BJ (cell line): ENCODE measurements at regions of chr11 and their contacts with region 1.

Region 1: DNA sequence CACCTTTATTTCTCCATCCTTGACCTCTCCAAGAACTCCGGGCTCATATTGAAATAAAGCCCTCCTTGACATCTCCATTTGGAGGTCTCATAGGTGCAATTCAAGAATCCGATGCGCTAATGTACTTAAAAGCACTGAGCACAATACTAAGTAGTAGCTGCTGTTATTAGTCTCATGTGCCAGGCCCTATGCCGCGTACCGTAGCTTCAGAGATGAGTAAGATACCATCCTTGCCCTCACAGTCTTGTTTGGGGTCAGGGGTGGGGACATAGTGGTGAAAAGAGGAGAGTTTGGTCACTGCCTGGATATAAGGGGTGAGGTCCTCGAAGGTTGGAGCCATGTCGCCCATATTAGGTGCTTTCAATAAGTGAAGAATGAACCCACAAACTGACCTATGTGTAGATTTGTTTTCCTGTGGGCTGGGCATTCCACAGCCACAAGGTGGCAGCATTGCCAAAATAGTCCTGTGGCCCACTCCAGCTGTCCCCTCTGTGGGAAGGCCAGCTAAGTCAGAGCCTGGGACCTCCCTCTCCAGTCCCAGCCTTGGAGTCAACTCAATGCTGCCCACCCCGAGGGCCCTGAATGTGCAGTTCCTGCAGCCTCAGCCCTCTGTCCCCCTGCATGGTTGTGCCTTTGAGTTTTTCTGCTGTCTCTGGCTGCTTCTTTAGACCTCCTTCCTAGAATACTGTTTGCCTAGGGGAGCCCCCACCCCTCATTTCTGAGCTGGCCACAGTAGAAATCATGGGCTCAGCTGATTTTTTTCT is 6.5 kb downstream of the DCPS start:
- DNase-seq: no peak
- H3K4me3 ChIP-seq: no peak overlapping the region
- H3K27me3 ChIP-seq: no peaks in the 10 kb centered on the region
- CTCF ChIP-seq: peak; percentile 91

Region 2: GRCh38 chr11:126194121-126194543 is 116.3 kb before region 1 on chr11:
- CTCF ChIA-PET with region 1: no interaction called
- POLR2A ChIA-PET with region 1: no interaction called
- DNase-seq: no peak
- H3K4me3 ChIP-seq: no peak overlapping the region
- H3K27me3 ChIP-seq: no peaks in the 10 kb centered on the region
- CTCF ChIP-seq: peak; percentile 59

Region 3: DNA sequence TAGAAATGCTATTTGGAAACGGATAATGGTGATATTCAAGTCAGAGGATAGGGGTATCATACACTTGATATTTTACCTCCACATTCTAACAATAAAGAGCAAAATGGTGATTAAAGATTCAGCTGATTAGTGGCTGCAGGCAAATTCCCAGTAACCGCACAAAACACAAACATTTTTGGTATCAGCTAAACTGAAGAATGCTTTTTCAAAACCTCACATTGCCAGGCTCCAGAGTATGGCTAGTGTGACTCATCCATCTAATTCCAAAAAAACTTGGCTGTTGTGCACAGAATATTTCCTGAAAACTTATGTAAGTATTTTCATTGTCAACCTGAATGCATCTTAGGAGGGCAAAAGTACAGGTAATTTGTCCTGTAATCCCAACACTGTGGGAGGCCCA is 52.6 kb before region 1 on chr11:
- CTCF ChIA-PET with region 1: no interaction called
- POLR2A ChIA-PET with region 1: no interaction called
- DNase-seq: peak; percentile 30
- H3K4me3 ChIP-seq: no peak overlapping the region
- H3K27me3 ChIP-seq: no peaks in the 10 kb centered on the region
- CTCF ChIP-seq: no peak

Region 4: GRCh38 chr11:126334659-126335462 is 24.5 kb after region 1 on chr11:
- CTCF ChIA-PET with region 1: interaction called, 17 read pairs
- POLR2A ChIA-PET with region 1: no interaction called
- DNase-seq: no peak
- H3K4me3 ChIP-seq: no peak overlapping the region
- H3K27me3 ChIP-seq: no peaks in the 10 kb centered on the region
- CTCF ChIP-seq: no peak

Region 5: DNA sequence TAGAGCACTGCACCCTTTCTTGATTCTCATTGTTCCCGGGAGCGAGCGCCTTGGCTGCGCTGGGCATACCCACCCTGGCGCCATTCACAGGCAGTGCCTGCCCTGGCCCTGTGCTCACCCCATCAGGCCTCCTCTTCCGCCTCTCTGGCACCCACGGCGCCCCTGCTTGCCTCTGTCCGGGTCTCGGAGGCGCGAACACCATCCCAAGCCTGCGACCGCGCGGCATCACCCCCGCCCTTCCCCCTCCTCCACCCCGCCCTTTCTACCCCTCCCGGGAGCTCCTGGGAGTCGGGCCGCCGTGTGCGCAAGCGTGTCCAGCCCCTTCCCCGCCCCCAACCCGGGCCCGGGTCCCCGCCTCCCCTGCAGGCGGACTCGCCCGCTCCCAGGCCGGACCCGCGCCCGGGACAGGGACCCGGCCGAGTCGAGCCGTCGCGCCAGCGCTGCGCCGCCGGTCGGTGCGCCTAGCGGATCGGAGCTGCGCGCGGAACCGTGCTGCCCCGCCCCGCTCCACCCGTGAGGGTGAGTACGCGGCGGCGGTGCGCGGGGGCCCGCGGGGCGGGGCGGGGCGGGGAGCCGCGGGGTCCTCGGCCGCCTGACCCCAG is 45.0 kb after region 1 on chr11 and contains the start of gene ST3GAL4:
- CTCF ChIA-PET with region 1: interaction called, 44 read pairs
- POLR2A ChIA-PET with region 1: no interaction called
- DNase-seq: no peak
- H3K4me3 ChIP-seq: peak within 1 kb of the TSS; percentile 79
- H3K27me3 ChIP-seq: no peaks in the 10 kb centered on the region
- CTCF ChIP-seq: no peak
- polyA plus RNA-seq, gene ST3GAL4: 19.4 and 31.8 TPM in 2 replicates

Region 6: DNA sequence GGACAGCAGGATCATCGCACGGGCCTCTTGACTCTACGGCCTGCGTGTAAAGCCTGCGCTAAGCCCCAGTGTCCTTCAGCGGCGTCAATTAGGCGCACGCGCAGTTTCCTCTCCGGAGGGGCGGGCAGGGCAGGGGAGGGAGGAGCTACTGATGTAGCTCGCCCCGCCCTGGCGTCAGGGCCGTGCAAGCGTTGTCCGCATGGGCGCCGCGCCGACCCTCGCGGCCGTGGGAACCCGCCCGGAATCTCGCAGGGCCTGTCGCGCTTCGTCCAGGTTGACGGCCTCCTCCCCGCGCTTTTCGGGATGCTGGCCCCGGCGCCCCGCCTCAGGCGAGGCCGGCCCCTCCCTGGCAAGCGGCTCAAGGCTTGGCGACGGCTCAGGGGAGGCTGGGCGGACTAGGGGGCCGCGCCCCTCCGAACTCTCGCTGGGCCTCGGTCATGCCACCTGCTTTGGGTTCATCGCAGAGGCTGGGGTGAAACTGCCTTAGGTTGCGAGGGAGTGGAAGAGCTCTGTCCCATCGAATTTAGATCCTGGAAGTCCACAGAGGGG is 106.2 kb after region 1 on chr11:
- CTCF ChIA-PET with region 1: interaction called, 16 read pairs
- POLR2A ChIA-PET with region 1: interaction called, 3 read pairs
- DNase-seq: no peak
- H3K4me3 ChIP-seq: peak overlapping the region; percentile 45
- H3K27me3 ChIP-seq: no peaks in the 10 kb centered on the region
- CTCF ChIP-seq: no peak

Region 7: DNA sequence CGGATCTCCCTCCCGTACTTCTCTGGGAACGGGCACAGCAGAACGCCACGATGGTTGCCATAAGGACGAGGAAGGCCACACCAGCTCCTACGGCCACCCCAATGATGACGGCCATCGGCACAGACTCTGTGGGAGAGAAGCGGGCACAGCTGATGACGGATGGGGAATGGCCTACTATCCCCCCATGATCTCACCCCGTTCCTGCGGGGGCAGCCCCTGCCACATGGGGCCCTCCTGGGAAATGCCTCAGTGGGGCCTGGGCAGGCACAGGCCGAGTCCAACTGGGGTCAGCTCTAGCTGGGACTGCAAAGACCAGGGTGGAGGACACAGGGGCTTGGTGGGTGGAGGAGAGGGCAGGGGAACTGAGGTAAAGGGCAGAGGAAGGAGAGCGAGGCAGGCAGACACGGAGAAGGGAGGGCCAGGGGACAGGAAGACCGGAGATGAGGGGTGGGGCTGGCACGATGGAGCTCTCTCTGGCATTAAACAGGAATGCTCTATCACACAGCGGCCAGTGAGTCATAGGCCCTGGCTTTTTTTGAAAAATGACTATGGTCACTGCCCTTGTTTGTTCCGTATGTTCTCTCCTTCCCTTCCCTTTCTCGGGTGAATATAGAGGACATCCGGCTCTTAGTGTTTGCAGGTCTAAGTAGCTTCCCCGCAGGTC is 121.1 kb after region 1 on chr11:
- CTCF ChIA-PET with region 1: interaction called, 41 read pairs
- POLR2A ChIA-PET with region 1: no interaction called
- DNase-seq: peak; percentile 35
- H3K4me3 ChIP-seq: no peak overlapping the region
- H3K27me3 ChIP-seq: no peaks in the 10 kb centered on the region
- CTCF ChIP-seq: no peak

Region 8: DNA sequence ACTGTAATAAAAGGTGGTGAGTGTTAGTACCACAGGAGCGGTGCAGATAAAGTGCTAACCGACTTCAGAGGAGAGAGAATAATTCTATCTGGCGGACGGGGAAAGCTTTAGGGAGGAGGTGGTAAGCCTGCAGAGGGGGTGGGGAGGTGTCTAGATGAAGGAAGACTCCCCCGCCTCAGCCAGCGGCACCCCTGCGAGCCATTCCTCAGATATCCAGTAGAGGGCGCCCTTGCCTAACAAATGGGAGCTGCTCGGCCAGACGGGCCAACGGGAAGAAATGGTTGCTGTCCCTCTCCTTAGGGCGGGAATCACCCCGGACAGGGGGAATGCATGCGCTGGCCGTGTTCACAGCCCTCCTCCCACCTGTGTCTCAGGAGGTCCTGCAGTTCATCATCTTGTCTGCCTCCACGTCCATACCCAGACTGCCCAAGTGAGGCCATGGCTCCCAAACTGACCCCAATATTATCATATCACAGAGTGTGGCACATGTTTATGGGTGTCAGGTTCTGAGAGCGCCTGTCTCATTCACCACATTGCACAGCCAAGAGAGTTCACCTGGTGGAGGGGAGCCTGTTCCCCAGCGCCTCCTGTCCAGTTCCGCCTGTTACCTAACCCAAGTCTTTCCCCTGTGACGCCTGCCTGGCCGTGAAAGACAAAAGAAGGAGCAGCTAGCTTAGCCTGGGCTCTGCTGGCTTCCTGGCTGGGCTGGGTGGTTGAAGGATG is 130.5 kb after region 1 on chr11:
- CTCF ChIA-PET with region 1: interaction called, 35 read pairs
- POLR2A ChIA-PET with region 1: no interaction called
- DNase-seq: no peak
- H3K4me3 ChIP-seq: no peak overlapping the region
- H3K27me3 ChIP-seq: no peaks in the 10 kb centered on the region
- CTCF ChIP-seq: peak; percentile 90

Region 9: DNA sequence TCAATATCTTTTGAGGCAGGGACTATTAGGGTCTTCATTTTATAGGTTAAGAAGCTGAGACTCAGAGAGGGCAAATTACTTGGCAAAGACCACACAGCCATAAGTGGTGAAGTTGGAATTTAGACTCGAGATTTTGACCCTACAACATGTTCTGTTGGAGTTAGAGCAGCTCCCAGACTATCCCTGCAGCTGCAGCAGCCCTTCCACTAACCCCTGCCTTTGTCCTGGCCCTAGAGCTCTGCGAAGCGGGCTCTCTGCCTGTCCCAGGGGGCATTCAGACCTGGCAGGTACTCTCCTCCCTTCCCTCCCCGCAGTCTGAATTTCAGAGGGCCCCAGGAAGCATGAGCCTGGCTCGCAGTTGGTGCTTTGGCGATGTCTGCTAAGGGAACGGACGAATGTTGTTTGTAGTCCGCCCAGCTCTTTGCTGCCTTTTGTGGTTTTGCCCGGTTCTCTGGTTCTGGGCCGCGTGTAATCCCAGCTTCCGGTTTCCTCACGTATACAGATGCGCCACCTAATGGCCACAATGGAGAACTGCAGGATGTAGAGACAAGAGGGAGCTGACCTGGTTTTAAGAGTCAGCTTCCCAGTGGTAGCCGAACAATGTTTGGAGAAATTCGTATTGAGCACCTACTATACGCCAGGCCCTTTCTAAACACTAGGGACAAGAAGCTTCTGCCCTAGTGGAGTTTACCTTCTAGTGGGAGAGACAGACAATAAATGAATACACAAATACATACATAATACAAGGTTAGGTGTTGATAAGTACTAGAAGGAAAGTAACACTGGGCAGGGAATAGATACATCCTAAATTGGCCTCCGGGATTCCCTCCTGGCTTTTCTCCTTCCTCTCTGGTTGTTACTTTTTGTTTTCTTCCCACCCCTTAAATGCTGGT is 170.2 kb after region 1 on chr11:
- CTCF ChIA-PET with region 1: interaction called, 71 read pairs
- POLR2A ChIA-PET with region 1: no interaction called
- DNase-seq: no peak
- H3K4me3 ChIP-seq: no peak overlapping the region
- H3K27me3 ChIP-seq: no peaks in the 10 kb centered on the region
- CTCF ChIP-seq: peak; percentile 93